K562 (cell line): ENCODE measurements at regions of chr2 and their contacts with region 1.

Region 1: DNA sequence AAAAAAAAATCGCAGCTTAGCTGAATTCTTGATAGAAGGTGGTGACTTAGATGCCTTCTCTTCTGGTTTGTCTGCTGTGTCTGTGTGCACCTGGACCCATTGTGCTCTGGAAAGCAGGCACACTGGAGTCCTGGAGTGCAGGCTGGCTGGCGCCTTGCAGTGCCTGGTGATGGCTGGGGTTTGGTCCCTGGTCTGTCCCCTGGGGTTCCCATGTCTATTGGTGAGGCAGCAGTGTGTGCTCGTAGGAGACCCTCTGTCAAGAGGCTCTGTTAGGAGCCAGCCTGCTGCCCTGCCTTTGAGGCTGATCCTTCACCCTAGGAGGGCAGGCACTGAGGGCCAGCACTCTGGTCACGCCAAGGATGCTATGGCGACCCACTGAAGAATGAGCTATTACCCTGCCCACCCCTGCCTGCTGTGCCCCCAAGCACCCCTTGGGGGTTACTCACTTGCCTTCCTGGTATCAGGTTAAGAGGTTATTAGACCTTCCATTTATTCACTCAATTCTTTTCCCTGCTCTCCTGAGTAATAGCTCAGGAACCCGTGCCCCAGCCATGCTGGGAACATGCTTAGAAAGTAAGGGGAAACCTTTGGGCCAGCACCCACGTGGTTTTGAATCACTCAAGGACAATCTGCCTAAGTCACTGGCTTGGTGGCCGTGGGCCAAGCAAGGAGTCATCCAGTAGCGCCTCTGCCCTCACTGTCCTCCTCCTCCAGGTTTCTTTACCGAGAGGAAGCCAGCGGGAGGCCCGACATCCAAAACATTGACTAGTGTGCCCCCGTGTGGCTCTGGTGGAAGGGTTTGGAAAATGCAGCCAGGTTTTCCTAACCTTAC is 284.5 kb downstream of the PRKCE start:
- DNase-seq: peak; percentile 77 to 88 (median 80)
- ATAC-seq: peak; percentile 98
- H3K4me3 ChIP-seq: no peak overlapping the region
- H3K27ac ChIP-seq: no peak overlapping the region
- H3K4me1 ChIP-seq: 0 out of 5 replicates have a peak, but pooled peaks cover 4% of the 10 kb centered on the region in 2 experiments
- H3K27me3 ChIP-seq: peaks cover 2 to 33% of the 10 kb centered on the region in 2 experiments; a peak in 4 of 5 replicates
- CTCF ChIP-seq: peak; percentile 78 to 90 (median 81)
- EP300 ChIP-seq: peak; percentile 41; the same call in 1 of the 2 replicates
- POLR2A ChIP-seq: no peak
- RAD21 ChIP-seq: peak; percentile 92 to 96

Region 2: GRCh38 chr2:44981136-44982108 is 954.6 kb before region 1 on chr2:
- CTCF ChIA-PET with region 1: interaction called, 3 read pairs
- POLR2A ChIA-PET with region 1: no interaction called
- in situ Hi-C with region 1: no loop called
- intact Hi-C with region 1: loop called (anchors 5 kb)
- DNase-seq: peak; percentile 71 to 80 (median 74)
- ATAC-seq: peak; percentile 93
- H3K4me3 ChIP-seq: no peak overlapping the region
- H3K27ac ChIP-seq: no peak overlapping the region
- H3K4me1 ChIP-seq: no peaks in the 10 kb centered on the region
- H3K27me3 ChIP-seq: peaks cover 5% of the 10 kb centered on the region in 2 experiments; a peak in 3 of 5 replicates
- CTCF ChIP-seq: peak; percentile 75 to 86 (median 82)
- EP300 ChIP-seq: no peak
- POLR2A ChIP-seq: no peak
- RAD21 ChIP-seq: peak; percentile 84 to 92

Region 3: GRCh38 chr2:45649858-45650811 is 285.9 kb before region 1 on chr2:
- CTCF ChIA-PET with region 1: interaction called, 3 read pairs
- POLR2A ChIA-PET with region 1: no interaction called
- in situ Hi-C with region 1: loop called (anchors 5 kb)
- intact Hi-C with region 1: no loop called
- DNase-seq: peak; percentile 46 to 59 (median 50)
- ATAC-seq: peak; percentile 63
- H3K4me3 ChIP-seq: peak overlapping the region; percentile 72
- H3K27ac ChIP-seq: peak overlapping the region; percentile 37; the same call in 1 of the 3 replicates
- H3K4me1 ChIP-seq: peaks cover 0 to 29% of the 10 kb centered on the region in 2 experiments; a peak in 4 of 5 replicates
- H3K27me3 ChIP-seq: peaks cover 31 to 55% of the 10 kb centered on the region in 2 experiments
- CTCF ChIP-seq: no peak
- EP300 ChIP-seq: no peak
- POLR2A ChIP-seq: no peak
- RAD21 ChIP-seq: no peak

Region 4: GRCh38 chr2:45794134-45794617 is 141.8 kb before region 1 on chr2:
- CTCF ChIA-PET with region 1: no interaction called
- POLR2A ChIA-PET with region 1: no interaction called
- in situ Hi-C with region 1: no loop called
- intact Hi-C with region 1: no loop called
- DNase-seq: no peak
- ATAC-seq: peak; percentile 49; the same call in 2 of the 3 replicates
- H3K4me3 ChIP-seq: no peak overlapping the region
- H3K27ac ChIP-seq: no peak overlapping the region
- H3K4me1 ChIP-seq: no peaks in the 10 kb centered on the region; a peak in 2 of 5 replicates
- H3K27me3 ChIP-seq: peaks cover 4 to 19% of the 10 kb centered on the region in 2 experiments; a peak in 3 of 5 replicates
- CTCF ChIP-seq: no peak
- EP300 ChIP-seq: no peak
- POLR2A ChIP-seq: no peak
- RAD21 ChIP-seq: no peak

Region 5: DNA sequence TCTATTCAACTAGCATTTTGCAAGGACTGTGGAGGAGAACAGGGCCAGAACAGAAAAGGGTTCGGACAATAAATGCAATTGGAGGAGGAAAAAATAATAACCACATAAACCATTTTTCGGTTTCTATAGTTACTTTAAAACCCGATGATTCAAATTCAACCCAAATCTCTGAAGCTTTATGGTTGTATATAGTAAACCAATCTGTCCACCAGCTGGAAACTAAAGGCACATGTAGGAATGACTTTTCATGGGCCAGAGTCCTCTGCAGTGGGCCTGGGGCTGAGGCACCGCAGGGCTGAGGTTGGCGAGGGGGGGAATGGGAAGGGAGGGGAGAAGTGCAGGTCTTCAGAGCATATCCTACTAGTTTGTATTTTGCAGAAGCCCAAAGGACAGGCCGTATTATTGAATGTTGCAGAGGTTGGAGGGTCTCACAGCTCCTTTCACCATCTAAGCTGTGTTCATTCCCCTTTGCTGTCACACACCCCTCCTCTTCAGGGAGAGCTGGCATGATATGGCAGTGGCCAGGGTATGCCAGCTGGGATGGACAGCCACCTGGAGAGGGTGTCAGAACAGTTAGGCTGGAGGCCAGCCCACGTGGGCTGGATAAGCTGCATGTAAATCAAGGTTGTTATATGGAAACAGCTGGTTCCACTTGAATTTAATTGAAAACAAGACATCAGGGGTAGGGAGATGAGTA is 17.4 kb before region 1 on chr2:
- CTCF ChIA-PET with region 1: no interaction called
- POLR2A ChIA-PET with region 1: no interaction called
- in situ Hi-C with region 1: no loop called
- intact Hi-C with region 1: no loop called
- DNase-seq: no peak
- ATAC-seq: no peak
- H3K4me3 ChIP-seq: no peak overlapping the region
- H3K27ac ChIP-seq: no peak overlapping the region
- H3K4me1 ChIP-seq: no peaks in the 10 kb centered on the region
- H3K27me3 ChIP-seq: peaks cover 0 to 25% of the 10 kb centered on the region in 2 experiments; a peak in 3 of 5 replicates
- CTCF ChIP-seq: no peak
- EP300 ChIP-seq: no peak
- POLR2A ChIP-seq: no peak
- RAD21 ChIP-seq: no peak